MCF 10A (cell line): ENCODE measurements at regions of chr5 and their contacts with region 1.

Region 1: DNA sequence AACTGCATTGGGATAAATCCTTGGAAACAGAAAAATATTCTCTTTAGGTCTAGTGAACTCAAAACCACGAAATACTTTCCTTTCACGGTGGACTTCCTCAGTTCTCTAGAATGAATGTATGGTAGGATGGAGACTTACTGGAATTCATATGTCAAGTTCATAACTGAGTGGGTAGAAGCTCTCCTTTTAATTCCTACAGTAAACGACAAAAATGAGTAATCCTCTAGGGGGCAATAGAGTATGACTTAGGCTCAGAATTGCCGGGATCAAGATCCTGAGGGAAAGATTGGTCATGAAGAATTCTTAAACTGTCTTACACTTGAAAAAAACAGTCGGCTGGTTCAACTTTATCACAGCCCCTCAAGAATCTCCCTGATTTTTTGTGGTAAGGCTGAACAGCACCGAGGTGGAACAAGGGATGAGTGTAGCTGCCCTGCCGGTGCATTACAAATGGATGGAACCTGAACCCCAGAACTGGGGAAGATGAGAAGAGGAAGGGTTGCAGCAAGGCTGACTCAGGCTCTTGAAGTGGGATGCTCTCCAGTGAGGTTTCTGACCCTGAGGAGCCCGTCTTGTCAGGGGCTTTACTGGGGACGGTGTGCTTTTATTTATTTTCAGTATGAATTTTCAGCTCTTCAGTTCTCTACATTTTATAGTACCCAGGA is 14.0 kb upstream of the LOX start:
- DNase-seq: peak; percentile 73
- H3K4me3 Mint-ChIP-seq: no peak overlapping the region
- H3K27ac Mint-ChIP-seq: no peak overlapping the region
- H3K4me1 Mint-ChIP-seq: peaks cover 5% of the 10 kb centered on the region
- H3K27me3 Mint-ChIP-seq: no peaks in the 10 kb centered on the region
- CTCF ChIP-seq: peak; percentile 70

Region 2: GRCh38 chr5:122142480-122143164 is 50.6 kb after region 1 on chr5:
- CTCF ChIA-PET with region 1: interaction called, 12 read pairs
- POLR2A ChIA-PET with region 1: no interaction called
- intact Hi-C with region 1: no loop called
- DNase-seq: peak; percentile 39
- H3K4me3 Mint-ChIP-seq: no peak overlapping the region
- H3K27ac Mint-ChIP-seq: peak overlapping the region; percentile 32
- H3K4me1 Mint-ChIP-seq: peaks cover 12% of the 10 kb centered on the region
- H3K27me3 Mint-ChIP-seq: no peaks in the 10 kb centered on the region
- CTCF ChIP-seq: no peak

Region 3: DNA sequence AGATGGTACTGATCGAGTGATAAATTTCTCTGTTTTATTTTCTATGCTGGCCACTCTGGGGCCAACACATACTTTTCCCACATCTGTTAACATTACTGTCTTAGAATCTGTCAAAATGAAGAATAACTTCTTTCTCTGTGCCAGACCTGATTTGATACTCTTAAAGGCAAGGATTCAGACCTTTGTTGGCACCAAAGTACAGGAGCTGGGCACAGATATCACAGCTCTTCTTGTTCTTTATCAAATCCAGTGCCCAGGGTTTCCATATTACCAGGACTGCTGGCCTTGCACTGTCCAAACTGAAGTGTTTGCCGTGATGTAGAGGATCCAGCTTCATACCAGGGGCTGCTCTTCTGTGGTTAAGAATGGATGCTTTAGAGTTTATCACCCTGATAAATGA is 58.1 kb after region 1 on chr5:
- CTCF ChIA-PET with region 1: interaction called, 237 read pairs
- POLR2A ChIA-PET with region 1: interaction called, 4 read pairs
- intact Hi-C with region 1: no loop called
- DNase-seq: no peak
- H3K4me3 Mint-ChIP-seq: no peak overlapping the region
- H3K27ac Mint-ChIP-seq: no peak overlapping the region
- H3K4me1 Mint-ChIP-seq: peaks cover 27% of the 10 kb centered on the region
- H3K27me3 Mint-ChIP-seq: no peaks in the 10 kb centered on the region
- CTCF ChIP-seq: no peak

Region 4: DNA sequence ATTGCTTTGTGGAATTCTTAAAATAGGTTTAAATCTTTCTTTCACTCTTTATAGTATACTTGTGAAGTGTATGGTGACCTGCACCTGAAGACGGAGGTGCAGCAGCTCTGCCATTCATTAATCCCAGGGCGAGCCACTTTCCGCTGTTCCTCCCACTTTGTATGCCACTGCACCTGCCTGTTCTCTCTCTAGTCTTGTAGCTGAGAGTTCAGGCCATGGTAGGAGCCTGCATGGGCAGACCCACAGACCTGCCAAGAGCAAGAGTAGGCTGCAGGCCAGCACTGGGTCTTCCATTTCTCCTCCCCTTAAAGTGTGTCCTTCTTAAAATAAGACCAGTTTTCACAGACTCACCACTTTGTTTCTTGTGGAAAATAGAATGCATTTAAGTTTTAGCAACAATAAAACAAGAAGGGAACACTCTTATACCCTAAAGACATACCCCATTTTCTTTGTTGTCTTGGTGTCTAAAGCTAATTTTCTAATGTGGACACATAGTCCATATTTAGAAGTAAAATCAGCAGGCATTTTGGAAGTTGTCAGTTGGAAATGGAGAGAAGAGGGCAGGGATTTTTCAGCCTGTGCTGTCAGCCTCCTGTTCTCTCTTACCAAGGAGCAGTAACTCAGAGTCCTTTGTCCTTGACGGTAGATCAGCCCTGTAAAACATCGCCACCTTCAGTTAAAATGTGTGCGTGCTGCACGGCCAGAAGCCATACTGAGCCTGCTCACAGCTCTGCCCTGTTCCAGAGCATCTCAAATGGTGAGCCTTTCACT is 323.1 kb after region 1 on chr5:
- CTCF ChIA-PET with region 1: interaction called, 3 read pairs
- POLR2A ChIA-PET with region 1: no interaction called
- intact Hi-C with region 1: loop called (anchors 2 kb)
- DNase-seq: peak; percentile 86
- H3K4me3 Mint-ChIP-seq: no peak overlapping the region
- H3K27ac Mint-ChIP-seq: no peak overlapping the region
- H3K4me1 Mint-ChIP-seq: peaks cover 6% of the 10 kb centered on the region
- H3K27me3 Mint-ChIP-seq: peaks cover 17% of the 10 kb centered on the region
- CTCF ChIP-seq: peak; percentile 87